ENCODE measurements at regions of chr9 and their contacts with region 1.

Region 1: GRCh38 chr9:137619240-137620047 is 639 bp downstream of the EHMT1 start:
- DNase-seq: no peak
- H3K4me3 ChIP-seq: peak overlapping the region; percentile 77 to 92
- H3K27ac ChIP-seq: peak overlapping the region; percentile 76
- H3K4me1 ChIP-seq: peaks cover 61% of the 10 kb centered on the region
- H3K27me3 ChIP-seq: no peaks in the 10 kb centered on the region
- CTCF ChIP-seq: no peak
- POLR2A ChIP-seq: no peak

Region 2: DNA sequence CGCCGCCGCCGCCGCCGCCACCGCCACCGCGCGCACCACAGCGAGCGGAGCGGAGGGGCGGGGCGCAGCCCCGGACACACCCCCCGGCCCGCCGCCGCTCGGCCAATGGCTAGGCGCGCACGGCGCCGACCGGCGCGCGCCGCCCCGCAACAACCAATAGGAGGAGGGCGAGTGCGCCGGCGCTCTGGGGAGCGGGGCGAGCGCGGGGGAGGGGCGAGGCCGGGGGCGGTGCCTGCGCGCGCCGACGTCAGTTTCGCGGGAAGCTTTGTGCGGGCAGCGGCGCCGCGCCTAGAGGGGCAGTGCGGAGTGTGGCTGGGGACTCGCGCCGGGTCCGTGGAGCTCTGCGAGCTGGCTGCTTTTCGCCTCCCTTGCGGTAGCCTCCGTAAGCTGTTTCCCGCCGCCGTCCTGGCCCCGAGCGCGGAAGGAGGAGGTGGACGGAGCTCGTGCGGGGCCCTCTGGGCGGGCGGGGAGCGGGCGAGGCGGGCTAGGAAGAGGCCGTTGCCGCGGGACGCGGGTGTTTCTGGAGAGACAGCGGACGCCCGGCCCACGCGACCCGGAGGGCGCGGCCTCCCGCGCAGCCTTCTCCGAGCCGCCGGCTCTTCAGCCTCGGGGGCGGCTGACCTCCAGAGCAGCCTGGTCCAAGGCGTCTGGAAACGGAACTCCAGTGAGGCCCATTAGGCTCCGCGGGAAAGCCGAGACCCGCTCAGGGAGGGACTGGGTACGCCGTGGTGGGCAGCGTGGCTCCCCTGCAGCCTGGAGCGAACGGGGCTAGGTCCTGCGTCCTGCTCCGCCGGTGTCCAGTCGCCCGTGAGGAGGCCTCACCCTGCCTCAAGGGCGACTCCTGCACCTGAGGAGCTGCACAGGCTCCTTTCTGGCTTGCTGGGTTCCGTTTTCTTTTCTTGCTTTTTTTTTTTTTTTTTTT is 28.7 kb before region 1 on chr9 and contains the start of gene ZMYND19:
- intact Hi-C with region 1: loop called (anchors 1 kb)
- DNase-seq: no peak
- H3K4me3 ChIP-seq: peak within 1 kb of the TSS; percentile 68 to 90
- H3K27ac ChIP-seq: no peak within 1 kb of the TSS
- H3K4me1 ChIP-seq: peaks cover 28% of the 10 kb centered on the region
- H3K27me3 ChIP-seq: no peaks in the 10 kb centered on the region
- CTCF ChIP-seq: no peak
- POLR2A ChIP-seq: no peak
- total RNA-seq, gene ZMYND19: 10.3 TPM

Measured in vagina (tissue), 2 donors.